A549 (cell line): ENCODE measurements at regions of chr19 and their contacts with region 1.

Region 1: DNA sequence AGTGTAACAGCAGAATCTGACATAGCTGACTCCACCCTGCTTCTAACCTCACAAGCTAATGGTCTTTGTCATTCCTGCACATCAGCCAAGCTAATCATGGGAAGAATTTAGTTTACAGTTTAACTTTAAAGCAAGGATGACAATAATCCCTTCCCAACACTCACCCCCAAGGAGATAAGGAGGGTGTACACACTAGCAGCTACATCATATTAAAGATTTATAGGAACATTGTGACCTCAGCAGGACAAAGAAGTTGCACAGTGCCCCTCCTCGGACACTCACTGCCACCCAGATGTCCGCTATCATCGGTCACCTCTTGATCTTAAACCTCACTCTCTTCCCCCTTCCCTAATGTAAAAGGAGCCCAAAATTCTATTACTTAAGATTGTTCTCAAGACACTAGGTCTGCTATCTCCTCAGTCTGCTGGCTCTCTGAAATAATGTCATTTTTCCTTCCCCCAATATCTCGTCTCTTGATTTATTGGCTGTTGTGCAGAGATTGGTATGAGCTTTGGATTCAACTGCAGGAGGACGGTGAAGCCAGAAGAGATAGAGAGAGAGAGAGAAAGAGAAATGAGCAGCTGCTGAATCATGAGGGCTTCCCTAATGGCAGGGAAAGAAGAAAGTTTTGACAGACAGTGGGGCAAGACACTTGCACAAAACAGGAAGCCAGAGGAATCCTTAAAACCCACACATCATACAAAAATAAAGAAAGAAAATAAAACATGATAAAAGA is 17.5 kb upstream of the FFAR2 start:
- DNase-seq: no peak
- ATAC-seq: no peak
- H3K4me3 ChIP-seq: no peak overlapping the region
- H3K27ac ChIP-seq: no peak overlapping the region
- H3K4me1 ChIP-seq: no peaks in the 10 kb centered on the region
- CTCF ChIP-seq: no peak
- EP300 ChIP-seq: no peak
- POLR2A ChIP-seq: no peak
- RAD21 ChIP-seq: no peak

Region 2: DNA sequence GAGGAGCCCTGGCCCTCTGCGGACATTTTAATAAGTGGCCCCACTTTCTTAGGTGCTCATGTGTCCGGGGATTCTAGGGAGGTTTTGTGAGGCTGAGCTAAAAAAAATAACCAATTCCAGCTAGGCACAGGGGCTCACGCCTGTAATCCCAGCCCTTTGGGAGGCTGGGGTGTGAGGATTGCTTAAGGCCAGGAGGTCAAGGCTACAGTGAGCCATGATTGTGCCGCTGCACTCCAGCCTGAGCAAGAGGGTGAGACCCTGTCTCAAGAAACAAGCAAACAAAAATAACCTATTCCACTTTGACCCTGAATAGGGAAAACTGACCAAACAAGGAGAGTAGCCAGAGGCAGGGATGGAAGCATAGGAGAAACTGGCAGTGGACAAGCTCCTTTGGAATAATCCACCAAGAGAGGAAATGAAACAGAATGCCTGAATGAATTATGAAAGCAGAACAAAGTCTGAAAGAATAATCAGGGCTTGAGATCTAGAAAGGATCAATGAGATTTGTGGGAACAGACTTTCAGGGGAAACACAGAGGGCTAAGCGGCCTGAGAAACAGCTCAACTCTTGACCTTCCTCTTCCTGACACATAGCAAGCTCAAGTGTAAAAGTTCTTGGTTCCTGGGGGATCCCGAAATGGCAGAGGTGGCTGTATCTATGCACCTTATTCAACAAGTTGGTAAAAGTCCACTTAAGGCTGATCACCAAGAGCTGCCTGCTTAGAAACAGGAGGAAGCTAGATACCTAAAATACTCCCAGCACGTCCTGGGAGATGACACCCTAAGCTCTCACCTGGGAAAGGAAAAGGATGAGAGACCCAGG is 12.7 kb before region 1 on chr19:
- CTCF ChIA-PET with region 1: interaction called, 11 read pairs
- POLR2A ChIA-PET with region 1: interaction called, 3 read pairs
- DNase-seq: no peak
- ATAC-seq: no peak
- H3K4me3 ChIP-seq: no peak overlapping the region
- H3K27ac ChIP-seq: no peak overlapping the region
- H3K4me1 ChIP-seq: 0 out of 3 replicates have a peak, but pooled peaks cover 8% of the 10 kb centered on the region
- CTCF ChIP-seq: no peak
- EP300 ChIP-seq: no peak
- POLR2A ChIP-seq: no peak
- RAD21 ChIP-seq: no peak